PC-9 (cell line): ENCODE measurements at regions of chr1 and their contacts with region 1.

Region 1: GRCh38 chr1:61201035-61201434 is 118.7 kb downstream of the NFIA start:
- DNase-seq: no peak
- H3K4me3 ChIP-seq: no peak overlapping the region
- H3K27ac ChIP-seq: no peak overlapping the region
- H3K4me1 ChIP-seq: no peaks in the 10 kb centered on the region
- H3K27me3 ChIP-seq: no peaks in the 10 kb centered on the region
- CTCF ChIP-seq: no peak

Region 2: GRCh38 chr1:60765204-60765603 is 435.8 kb before region 1 on chr1:
- CTCF ChIA-PET with region 1: no interaction called
- POLR2A ChIA-PET with region 1: no interaction called
- intact Hi-C with region 1: no loop called
- DNase-seq: peak in 1 of 2 experiments; percentile 12
- H3K4me3 ChIP-seq: no peak overlapping the region
- H3K27ac ChIP-seq: no peak overlapping the region
- H3K4me1 ChIP-seq: no peaks in the 10 kb centered on the region
- H3K27me3 ChIP-seq: no peaks in the 10 kb centered on the region
- CTCF ChIP-seq: peak; percentile 74

Region 3: GRCh38 chr1:61035880-61036279 is 165.2 kb before region 1 on chr1:
- CTCF ChIA-PET with region 1: no interaction called
- POLR2A ChIA-PET with region 1: no interaction called
- intact Hi-C with region 1: no loop called
- DNase-seq: no peak
- H3K4me3 ChIP-seq: no peak overlapping the region
- H3K27ac ChIP-seq: no peak overlapping the region
- H3K4me1 ChIP-seq: no peaks in the 10 kb centered on the region
- H3K27me3 ChIP-seq: no peaks in the 10 kb centered on the region
- CTCF ChIP-seq: no peak

Region 4: GRCh38 chr1:61097317-61097716 is 103.7 kb before region 1 on chr1:
- CTCF ChIA-PET with region 1: no interaction called
- POLR2A ChIA-PET with region 1: interaction called, 11 read pairs
- intact Hi-C with region 1: no loop called
- DNase-seq: peak in 1 of 2 experiments; percentile 46
- H3K4me3 ChIP-seq: no peak overlapping the region
- H3K27ac ChIP-seq: no peak overlapping the region
- H3K4me1 ChIP-seq: peaks cover 5% of the 10 kb centered on the region; the same call in 1 of the 2 replicates
- H3K27me3 ChIP-seq: no peaks in the 10 kb centered on the region
- CTCF ChIP-seq: no peak